ENCODE measurements at regions of chr12 and their contacts with region 1.

Region 1: DNA sequence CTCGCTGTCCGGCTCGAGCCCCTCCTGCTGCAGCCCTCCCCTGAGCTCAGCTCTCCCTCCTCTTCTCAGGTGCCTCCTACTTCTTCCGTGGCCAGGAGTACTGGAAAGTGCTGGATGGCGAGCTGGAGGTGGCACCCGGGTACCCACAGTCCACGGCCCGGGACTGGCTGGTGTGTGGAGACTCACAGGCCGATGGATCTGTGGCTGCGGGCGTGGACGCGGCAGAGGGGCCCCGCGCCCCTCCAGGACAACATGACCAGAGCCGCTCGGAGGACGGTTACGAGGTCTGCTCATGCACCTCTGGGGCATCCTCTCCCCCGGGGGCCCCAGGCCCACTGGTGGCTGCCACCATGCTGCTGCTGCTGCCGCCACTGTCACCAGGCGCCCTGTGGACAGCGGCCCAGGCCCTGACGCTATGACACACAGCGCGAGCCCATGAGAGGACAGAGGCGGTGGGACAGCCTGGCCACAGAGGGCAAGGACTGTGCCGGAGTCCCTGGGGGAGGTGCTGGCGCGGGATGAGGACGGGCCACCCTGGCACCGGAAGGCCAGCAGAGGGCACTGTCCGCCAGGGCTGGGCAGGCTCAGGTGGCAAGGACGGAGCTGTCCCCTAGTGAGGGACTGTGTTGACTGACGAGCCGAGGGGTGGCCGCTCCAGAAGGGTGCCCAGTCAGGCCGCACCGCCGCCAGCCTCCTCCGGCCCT is 22.8 kb downstream of the MMP17 start:
- DNase-seq: peak; percentile 81 to 84
- ATAC-seq: peak; percentile 85 to 92
- H3K4me3 ChIP-seq: no peak overlapping the region
- H3K27ac ChIP-seq: peak overlapping the region; percentile 73 to 96
- H3K4me1 ChIP-seq: peaks cover 37% of the 10 kb centered on the region
- CTCF ChIP-seq: peak; percentile 92
- EP300 ChIP-seq: no peak
- POLR2A ChIP-seq: no peak
- RAD21 ChIP-seq: peak; percentile 99

Region 2: GRCh38 chr12:131836193-131836592 is 14.8 kb before region 1 on chr12:
- CTCF ChIA-PET with region 1: interaction called, 20 read pairs
- POLR2A ChIA-PET with region 1: no interaction called
- DNase-seq: no peak
- ATAC-seq: no peak
- H3K4me3 ChIP-seq: no peak overlapping the region
- H3K27ac ChIP-seq: no peak overlapping the region
- H3K4me1 ChIP-seq: peaks cover 22% of the 10 kb centered on the region; the same call in 2 of the 3 replicates
- CTCF ChIP-seq: peak; percentile 52
- EP300 ChIP-seq: no peak
- POLR2A ChIP-seq: no peak
- RAD21 ChIP-seq: peak; percentile 46 to 61; a peak in 4 of 5 replicates

Region 3: DNA sequence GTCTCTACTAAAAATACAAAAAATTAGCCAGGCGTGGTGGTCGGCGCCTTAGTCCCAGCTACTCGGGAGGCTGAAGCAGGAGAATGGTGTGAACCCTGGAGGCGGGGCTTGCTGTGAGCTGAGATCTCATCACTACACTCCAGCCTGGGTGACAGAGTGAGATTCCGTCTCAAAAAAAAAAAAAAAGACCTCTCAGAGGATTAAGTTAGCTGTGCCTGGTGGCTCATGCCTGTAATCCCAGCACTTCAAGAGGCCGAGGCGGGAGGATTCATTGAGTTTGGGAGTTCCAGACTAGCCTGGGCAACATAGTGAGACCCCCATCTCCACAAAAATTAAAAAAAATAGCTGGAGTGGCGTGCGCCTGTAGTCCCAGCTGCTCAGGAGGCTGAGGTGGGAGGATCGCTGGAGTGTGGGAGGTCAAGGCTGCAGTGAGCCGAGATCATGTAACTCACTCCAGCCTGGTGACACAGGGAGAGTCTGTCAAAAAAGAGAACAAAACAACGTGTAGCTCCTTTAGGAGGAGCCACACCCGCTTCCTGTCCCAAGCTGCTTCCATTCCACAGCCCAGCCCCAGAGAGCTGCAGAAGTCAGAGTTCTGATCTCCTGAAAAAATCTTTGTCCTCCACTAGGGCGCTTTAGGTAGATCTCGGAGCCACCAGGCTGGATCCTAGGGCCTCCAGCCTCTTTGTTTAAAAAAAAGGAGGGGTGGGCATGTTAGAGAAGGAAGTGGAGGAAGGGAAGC is 31.9 kb after region 1 on chr12:
- CTCF ChIA-PET with region 1: interaction called, 10 read pairs
- POLR2A ChIA-PET with region 1: no interaction called
- DNase-seq: peak; percentile 38 to 59
- ATAC-seq: peak; percentile 87 to 90
- H3K4me3 ChIP-seq: no peak overlapping the region
- H3K27ac ChIP-seq: peak overlapping the region; percentile 37 to 70; a peak in 5 of 6 replicates
- H3K4me1 ChIP-seq: peaks cover 12% of the 10 kb centered on the region
- CTCF ChIP-seq: no peak
- EP300 ChIP-seq: no peak
- POLR2A ChIP-seq: no peak
- RAD21 ChIP-seq: no peak

Region 4: GRCh38 chr12:131912518-131913294 is 61.7 kb after region 1 on chr12:
- CTCF ChIA-PET with region 1: interaction called, 24 read pairs
- POLR2A ChIA-PET with region 1: no interaction called
- DNase-seq: peak; percentile 82 to 90
- ATAC-seq: peak; percentile 30 to 51; a peak in 5 of 6 replicates
- H3K4me3 ChIP-seq: no peak overlapping the region
- H3K27ac ChIP-seq: peak overlapping the region; percentile 76 to 88
- H3K4me1 ChIP-seq: peaks cover 44% of the 10 kb centered on the region
- CTCF ChIP-seq: no peak
- EP300 ChIP-seq: no peak; a peak in 1 of 5 replicates
- POLR2A ChIP-seq: no peak
- RAD21 ChIP-seq: peak in 1 of 2 experiments; percentile 22; a peak in 2 of 5 replicates

Region 5: GRCh38 chr12:131949431-131950181 is 98.6 kb after region 1 on chr12 and contains the start of gene EP400:
- CTCF ChIA-PET with region 1: interaction called, 58 read pairs
- POLR2A ChIA-PET with region 1: interaction called, 8 read pairs
- DNase-seq: peak; percentile 87 to 95
- ATAC-seq: peak; percentile 89 to 90
- H3K4me3 ChIP-seq: peak within 1 kb of the TSS; percentile 81
- H3K27ac ChIP-seq: peak within 1 kb of the TSS; percentile 93 to 98
- H3K4me1 ChIP-seq: peaks cover 7% of the 10 kb centered on the region
- CTCF ChIP-seq: peak; percentile 85
- EP300 ChIP-seq: 0 out of 5 replicates have a peak, but pooled peaks of 1 of the 2 experiments have one; percentile 28
- POLR2A ChIP-seq: peak; percentile 57
- RAD21 ChIP-seq: peak; percentile 61 to 93
- polyA plus RNA-seq, gene EP400: 9.7 and 18.5 TPM in 2 replicates

Region 6: GRCh38 chr12:131980260-131980659 is 129.3 kb after region 1 on chr12:
- CTCF ChIA-PET with region 1: interaction called, 10 read pairs
- POLR2A ChIA-PET with region 1: no interaction called
- DNase-seq: peak in 1 of 2 experiments; percentile 54
- ATAC-seq: peak; percentile 76 to 83; a peak in 4 of 6 replicates
- H3K4me3 ChIP-seq: no peak overlapping the region
- H3K27ac ChIP-seq: no peak overlapping the region
- H3K4me1 ChIP-seq: no peaks in the 10 kb centered on the region
- CTCF ChIP-seq: peak; percentile 34; the same call in 2 of the 3 replicates
- EP300 ChIP-seq: no peak
- POLR2A ChIP-seq: no peak
- RAD21 ChIP-seq: peak; percentile 29 to 34; a peak in 3 of 5 replicates

Region 7: DNA sequence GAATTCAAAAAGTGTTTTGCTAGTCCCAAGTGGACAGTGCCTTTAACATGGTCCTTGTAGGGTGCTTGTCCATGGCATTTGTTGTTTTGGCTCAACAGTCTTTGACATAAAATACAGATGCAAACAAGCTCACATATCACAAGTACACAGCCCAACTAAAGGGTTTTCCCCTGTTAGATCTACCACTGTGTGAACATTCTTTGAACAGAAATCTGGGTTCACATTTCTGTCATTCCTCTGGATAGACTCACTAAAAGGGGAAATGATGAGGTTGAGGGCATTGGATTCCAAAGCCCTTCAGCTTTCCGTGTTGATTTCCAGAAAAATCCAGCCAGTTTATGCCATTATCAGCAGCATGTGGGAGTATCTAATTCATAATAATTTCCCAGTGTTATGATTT is 152.8 kb after region 1 on chr12:
- CTCF ChIA-PET with region 1: interaction called, 31 read pairs
- POLR2A ChIA-PET with region 1: no interaction called
- DNase-seq: no peak
- ATAC-seq: no peak
- H3K4me3 ChIP-seq: no peak overlapping the region
- H3K27ac ChIP-seq: no peak overlapping the region
- H3K4me1 ChIP-seq: peaks cover 9% of the 10 kb centered on the region; the same call in 1 of the 3 replicates
- CTCF ChIP-seq: no peak
- EP300 ChIP-seq: no peak
- POLR2A ChIP-seq: no peak
- RAD21 ChIP-seq: no peak

Measured in A549 (cell line).